Adrenal gland (tissue), 19 donors: ENCODE measurements at regions of chr2 and their contacts with region 1.

Region 1: DNA sequence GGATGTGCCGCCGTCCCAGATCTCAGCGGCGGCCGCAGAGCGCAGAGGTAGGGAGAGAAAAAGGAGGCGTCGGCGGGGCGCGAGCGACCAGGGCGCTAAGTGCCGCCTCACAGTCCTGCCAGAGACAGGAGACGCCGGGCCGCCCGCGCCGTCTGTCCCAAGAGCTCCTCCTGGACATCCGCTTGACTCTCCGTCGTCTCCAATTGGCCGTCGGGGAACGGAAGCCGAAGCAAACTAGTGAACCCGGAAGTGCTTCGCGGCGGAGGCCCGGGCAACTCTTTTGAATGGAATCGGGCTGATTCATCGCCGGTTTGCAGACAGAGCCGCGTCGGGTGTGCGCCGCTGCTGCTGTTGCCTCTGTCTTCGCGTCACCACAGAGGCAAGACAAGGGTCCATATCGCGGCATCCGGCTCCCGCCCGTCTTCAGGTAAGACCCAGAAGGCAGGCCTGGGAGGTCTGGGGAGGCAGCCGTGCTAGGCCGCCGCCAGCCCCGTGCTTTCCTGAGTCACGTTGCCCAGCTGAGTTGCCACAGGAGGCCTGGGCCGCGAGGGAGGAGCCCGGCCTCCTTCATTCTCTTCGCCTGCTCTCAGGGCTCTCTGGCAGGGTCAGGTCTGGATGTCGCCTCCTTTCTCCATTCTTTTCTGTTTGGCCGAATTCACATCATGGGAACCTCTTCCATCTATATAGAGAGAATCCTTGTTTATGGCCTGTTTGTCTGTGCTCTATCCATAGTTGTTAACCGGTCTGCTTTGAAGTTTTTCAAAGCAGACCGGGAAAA is at the start of gene PSMD14:
- DNase-seq: peak; percentile 91 to 97 (median 95)
- H3K4me3 ChIP-seq: peak within 1 kb of the TSS; percentile 52 to 71 (median 64)
- H3K27ac ChIP-seq: peak within 1 kb of the TSS; percentile 76 to 92 (median 88)
- H3K4me1 ChIP-seq: peaks cover 0 to 13% of the 10 kb centered on the region in 2 donors
- H3K27me3 ChIP-seq: no peaks in the 10 kb centered on the region
- CTCF ChIP-seq: no peak
- POLR2A ChIP-seq: peak; percentile 36 to 79
- total RNA-seq, gene PSMD14: 34.1 to 182 (median 52.7) TPM

Region 2: GRCh38 chr2:161237392-161238264 is 70.7 kb before region 1 on chr2:
- intact Hi-C with region 1: no loop called
- DNase-seq: peak; percentile 40 to 85 (median 56)
- H3K4me3 ChIP-seq: peak overlapping the region in 2 of 4 donors; percentile 16 to 86
- H3K27ac ChIP-seq: peak overlapping the region in 1 of 5 donors; percentile 38
- H3K4me1 ChIP-seq: peaks cover 5 to 15% of the 10 kb centered on the region in 2 donors
- H3K27me3 ChIP-seq: no peaks in the 10 kb centered on the region
- CTCF ChIP-seq: no peak
- POLR2A ChIP-seq: no peak

Region 3: DNA sequence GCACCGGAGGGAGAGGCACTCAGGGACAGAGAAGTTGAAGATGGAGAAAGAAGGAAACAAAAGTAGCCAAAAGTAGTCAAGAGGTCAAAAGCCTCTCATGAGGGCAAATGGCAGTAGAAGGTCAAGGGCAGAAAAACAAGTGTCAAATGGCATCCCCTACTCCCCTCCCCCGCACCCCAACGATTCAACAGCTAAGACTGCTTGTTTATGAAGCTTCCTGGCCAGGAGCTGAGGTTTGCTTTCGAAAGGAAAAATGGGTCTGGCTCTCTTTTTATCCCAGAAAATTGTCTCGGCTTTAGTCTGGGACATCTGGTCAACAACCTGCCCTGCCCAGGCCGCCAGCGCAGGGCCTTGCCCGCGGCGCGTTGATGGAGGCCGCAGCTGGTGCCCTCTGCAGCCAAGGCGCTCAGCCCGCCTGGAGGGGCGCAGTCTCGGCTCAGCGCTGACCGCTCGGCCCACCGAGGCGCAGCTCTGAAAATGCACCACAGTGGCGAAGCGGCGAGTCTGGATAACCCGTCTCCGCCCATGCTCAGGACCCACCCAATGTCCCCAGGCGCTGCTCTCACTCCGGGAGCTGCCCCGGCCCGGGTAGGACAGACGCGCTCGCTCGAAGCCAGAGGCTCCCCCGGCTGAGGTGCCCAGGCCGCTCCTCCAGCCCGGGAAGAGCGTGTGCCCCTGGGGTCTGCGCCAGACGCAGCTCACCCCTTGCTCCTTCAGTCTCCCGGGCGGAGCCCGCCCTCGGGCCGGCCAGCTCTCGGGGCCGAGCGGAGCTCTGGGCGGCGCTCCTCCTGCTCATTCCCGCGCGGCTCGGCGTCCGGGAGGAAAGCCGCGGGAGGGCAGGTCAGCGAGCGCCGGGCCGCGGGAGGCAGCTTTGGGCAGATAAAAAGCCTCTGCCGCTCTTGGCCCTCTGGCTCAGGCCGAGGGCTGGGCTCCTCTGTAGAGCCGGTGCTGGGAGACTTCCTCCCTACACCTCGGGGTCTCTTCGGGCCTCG is 106.0 kb after region 1 on chr2:
- intact Hi-C with region 1: loop called in 1 of 2 experiments (anchors 5 kb)
- DNase-seq: peak in 4 of 7 donors; percentile 23 to 38 (median 28)
- H3K4me3 ChIP-seq: peak overlapping the region in 2 of 4 donors; percentile 36 to 45
- H3K27ac ChIP-seq: no peak overlapping the region
- H3K4me1 ChIP-seq: peaks cover 14 to 32% of the 10 kb centered on the region in 2 donors
- H3K27me3 ChIP-seq: peaks cover 49% of the 10 kb centered on the region
- CTCF ChIP-seq: no peak
- POLR2A ChIP-seq: no peak